Colonic mucosa (tissue), 4 donors: ENCODE measurements at regions of chr13 and their contacts with region 1.

Region 1: DNA sequence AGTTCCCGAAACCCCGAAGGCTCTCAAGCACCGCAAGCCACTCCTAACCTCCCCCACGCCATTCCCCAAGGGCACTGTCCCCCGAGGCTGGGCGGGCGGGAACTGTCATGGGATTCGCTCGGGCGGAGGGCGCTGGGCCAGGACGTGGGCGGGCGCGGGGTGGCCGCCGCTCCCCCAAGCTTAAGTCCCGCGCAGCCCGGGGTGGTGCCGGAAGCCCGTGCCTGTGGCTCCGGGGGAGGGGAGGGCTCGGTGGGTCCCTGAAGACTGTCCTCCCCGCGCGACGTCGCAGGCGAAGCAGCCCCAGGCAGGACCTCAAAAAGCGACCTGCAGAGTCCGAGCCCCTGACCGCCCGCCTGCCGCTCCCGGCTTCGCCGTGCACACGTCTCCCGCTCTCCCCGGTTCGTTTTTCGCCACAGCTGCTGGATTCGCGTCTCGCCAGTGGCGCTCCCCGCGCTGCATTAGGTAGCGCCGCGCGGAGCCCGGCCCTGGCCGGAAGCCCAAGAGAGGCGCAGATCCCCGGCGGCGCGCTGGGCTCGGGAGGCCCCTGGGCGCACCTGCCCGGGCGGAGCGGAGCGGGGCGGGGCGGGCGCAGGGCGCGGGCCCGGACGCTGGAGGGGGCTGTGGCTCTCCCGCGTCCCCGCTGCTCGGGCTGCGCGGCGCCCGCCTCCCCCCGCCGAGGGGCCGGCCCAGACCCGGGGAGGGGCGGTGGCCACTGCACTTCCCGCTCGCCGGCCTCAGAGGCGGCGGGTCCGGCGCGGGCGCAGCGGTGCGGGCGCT is at the start of gene FARP1:
- DNase-seq: peak; percentile 79
- H3K4me3 ChIP-seq: peak within 1 kb of the TSS; percentile 64
- H3K27ac ChIP-seq: peak within 1 kb of the TSS; percentile 44
- H3K4me1 ChIP-seq: no peaks in the 10 kb centered on the region
- H3K27me3 ChIP-seq: no peaks in the 10 kb centered on the region
- CTCF ChIP-seq: no peak
- total RNA-seq, gene FARP1: 39.1 to 53.5 TPM

Region 2: GRCh38 chr13:97257800-97258799 is 884.5 kb before region 1 on chr13:
- intact Hi-C with region 1: no loop called
- DNase-seq: no peak
- H3K4me3 ChIP-seq: no peak overlapping the region
- H3K27ac ChIP-seq: peak overlapping the region; percentile 6
- H3K4me1 ChIP-seq: no peaks in the 10 kb centered on the region
- H3K27me3 ChIP-seq: no peaks in the 10 kb centered on the region
- CTCF ChIP-seq: no peak

Region 3: DNA sequence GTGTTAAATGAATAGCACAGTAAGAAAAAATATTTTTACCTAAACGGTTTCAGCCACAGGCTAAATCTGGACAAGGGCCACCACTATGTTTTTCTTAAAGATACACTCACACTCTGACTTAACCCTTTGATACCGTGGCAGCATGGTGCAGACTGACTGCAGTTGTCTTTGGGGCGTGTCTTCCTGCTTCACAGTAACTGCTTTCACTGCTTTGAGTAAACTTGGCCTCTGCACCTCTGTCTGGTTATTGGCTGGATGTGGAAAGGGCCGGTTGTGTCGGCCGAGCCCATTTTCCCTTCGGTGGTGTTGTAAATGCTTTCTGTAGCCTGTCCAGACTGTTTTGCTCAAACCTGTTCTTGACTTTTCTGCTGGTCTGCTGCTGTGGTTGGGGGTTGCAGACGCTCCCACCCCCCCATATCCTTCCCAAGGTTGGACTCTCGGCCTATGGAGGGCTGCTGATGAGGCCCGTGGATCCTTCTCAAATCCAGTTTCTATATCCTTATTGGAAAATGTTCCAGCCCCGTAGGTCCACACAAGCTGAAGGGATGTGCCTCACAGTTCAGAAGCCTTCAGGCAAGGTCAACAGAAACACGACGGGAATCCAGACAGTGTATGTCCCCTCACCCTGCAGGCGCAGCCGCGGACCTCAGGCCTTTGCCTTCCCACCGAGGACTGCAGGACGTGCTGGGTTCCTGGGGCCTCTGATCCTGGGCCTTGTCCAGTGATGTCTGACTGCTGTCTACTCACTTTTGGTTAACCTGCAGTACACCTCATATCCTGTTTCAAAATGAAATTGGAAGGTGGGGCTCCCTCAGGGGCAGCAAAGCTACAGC is 124.7 kb after region 1 on chr13:
- intact Hi-C with region 1: loop called (anchors 10 kb)
- DNase-seq: peak; percentile 82
- H3K4me3 ChIP-seq: no peak overlapping the region
- H3K27ac ChIP-seq: peak overlapping the region; percentile 51
- H3K4me1 ChIP-seq: peaks cover 5% of the 10 kb centered on the region
- H3K27me3 ChIP-seq: no peaks in the 10 kb centered on the region
- CTCF ChIP-seq: no peak

Region 4: GRCh38 chr13:98429977-98430736 is 287.6 kb after region 1 on chr13:
- intact Hi-C with region 1: loop called (anchors 5 kb)
- DNase-seq: no peak
- H3K4me3 ChIP-seq: no peak overlapping the region
- H3K27ac ChIP-seq: no peak overlapping the region
- H3K4me1 ChIP-seq: peaks cover 3% of the 10 kb centered on the region
- H3K27me3 ChIP-seq: no peaks in the 10 kb centered on the region
- CTCF ChIP-seq: no peak